Mammary epithelial cell (primary cell): ENCODE measurements at regions of chr16 and their contacts with region 1.

Region 1: DNA sequence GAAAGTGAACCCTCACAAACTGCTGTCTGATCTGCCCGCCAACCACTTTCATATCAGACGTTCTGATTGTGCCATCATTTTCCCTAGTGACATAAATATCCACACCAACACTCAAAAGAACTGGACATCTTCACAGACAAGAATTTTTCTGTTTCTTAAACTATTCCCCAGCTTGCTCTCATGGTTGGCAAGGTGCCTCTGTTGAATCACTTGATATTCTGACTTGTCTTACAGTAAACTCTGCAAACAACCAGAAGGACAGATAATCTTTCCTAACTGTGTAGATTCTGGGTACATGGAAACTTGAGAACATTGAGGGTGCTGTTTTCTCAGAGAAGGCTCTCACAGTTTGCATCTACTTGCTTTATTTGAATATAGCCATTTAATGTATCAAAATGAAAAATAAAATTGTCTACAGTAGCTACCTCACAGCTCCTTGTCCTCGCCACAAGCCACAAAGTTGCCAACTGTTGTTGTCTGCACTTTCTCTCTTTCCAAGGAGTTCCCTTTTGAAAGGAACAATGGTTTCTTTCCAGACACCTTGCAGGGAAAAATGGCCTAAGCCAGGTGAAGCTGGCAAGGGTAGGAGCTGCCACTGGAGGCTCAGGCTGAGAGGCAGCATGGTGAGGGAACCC is 46.0 kb upstream of the ADAMTS18 start:
- DNase-seq: no peak
- H3K4me3 ChIP-seq: no peak overlapping the region
- H3K27ac ChIP-seq: no peak overlapping the region
- H3K4me1 ChIP-seq: no peaks in the 10 kb centered on the region
- H3K27me3 ChIP-seq: peaks cover 3% of the 10 kb centered on the region
- CTCF ChIP-seq: no peak

Region 2: DNA sequence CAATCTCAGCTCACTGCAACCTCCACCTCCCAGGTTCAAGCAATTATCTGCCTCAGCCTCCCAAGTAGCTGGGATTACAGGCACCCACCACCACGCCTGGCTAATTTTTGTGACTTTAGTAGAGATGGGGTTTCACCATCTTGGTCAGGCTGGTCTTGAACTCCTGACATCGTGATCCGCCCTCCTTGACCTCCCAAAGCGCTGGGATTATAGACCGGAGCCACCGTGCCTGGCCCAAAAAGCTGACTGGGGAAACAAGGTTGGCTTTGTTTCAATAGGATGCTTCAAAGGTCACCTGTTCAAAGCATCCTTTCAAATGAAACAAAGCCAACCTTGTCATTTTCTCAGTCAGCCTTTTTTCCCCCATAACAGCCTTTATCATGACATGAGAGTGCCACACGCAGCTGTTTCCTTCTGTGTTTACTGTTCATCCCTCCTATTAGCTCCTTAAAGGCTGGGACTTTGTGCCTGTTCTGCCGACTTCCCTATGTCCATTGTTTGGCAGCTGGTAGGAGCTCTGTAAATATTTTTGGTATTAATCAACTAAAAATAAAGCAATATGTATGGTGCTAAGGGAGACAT is 97.1 kb before region 1 on chr16:
- CTCF ChIA-PET with region 1: no interaction called
- dilution Hi-C with region 1: loop called (anchors 5 kb)
- in situ Hi-C with region 1: no loop called
- intact Hi-C with region 1: no loop called
- DNase-seq: no peak
- H3K4me3 ChIP-seq: no peak overlapping the region
- H3K27ac ChIP-seq: no peak overlapping the region
- H3K4me1 ChIP-seq: no peaks in the 10 kb centered on the region
- H3K27me3 ChIP-seq: no peaks in the 10 kb centered on the region
- CTCF ChIP-seq: no peak